SK-N-SH (cell line): ENCODE measurements at regions of chr12 and their contacts with region 1.

Region 1: DNA sequence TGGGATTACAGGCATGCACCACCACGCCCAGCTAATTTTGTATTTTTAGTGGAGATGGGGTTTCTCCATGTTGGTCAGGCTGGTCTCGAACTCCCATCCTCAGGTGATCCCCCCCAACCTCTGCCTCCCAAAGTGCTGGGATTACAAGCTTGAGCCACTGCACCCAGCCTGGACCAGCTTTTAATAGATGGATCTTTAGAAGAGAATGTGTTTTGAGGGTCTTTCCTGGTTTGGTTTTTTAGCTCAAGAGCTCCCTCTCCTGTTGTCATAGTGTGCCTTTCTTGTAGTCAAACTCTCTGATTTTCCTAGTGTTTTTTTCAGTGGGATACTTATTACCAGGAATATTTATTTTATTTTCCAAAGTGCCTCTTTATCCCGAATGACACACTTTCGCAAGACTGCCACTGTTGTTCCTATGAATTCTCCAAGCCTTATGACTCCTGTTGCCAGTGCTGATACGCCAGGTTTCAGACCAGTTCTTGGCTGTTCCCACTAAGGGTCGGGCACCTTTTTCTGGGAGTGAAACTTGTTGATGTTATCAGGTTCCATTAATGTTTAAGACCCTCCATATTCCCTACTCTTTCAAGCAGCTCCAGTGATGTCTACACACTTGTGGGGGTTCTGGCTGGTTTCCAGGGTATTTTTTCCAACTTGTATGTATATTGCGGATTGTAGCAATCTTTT is 31.5 kb upstream of the LIMA1 start:
- DNase-seq: peak; percentile 73
- H3K4me3 ChIP-seq: no peak overlapping the region; a peak in 1 of 4 replicates
- H3K27ac ChIP-seq: no peak overlapping the region
- H3K4me1 ChIP-seq: no peaks in the 10 kb centered on the region
- H3K27me3 ChIP-seq: no peaks in the 10 kb centered on the region
- CTCF ChIP-seq: peak; percentile 87
- EP300 ChIP-seq: no peak
- RAD21 ChIP-seq: peak; percentile 93

Region 2: DNA sequence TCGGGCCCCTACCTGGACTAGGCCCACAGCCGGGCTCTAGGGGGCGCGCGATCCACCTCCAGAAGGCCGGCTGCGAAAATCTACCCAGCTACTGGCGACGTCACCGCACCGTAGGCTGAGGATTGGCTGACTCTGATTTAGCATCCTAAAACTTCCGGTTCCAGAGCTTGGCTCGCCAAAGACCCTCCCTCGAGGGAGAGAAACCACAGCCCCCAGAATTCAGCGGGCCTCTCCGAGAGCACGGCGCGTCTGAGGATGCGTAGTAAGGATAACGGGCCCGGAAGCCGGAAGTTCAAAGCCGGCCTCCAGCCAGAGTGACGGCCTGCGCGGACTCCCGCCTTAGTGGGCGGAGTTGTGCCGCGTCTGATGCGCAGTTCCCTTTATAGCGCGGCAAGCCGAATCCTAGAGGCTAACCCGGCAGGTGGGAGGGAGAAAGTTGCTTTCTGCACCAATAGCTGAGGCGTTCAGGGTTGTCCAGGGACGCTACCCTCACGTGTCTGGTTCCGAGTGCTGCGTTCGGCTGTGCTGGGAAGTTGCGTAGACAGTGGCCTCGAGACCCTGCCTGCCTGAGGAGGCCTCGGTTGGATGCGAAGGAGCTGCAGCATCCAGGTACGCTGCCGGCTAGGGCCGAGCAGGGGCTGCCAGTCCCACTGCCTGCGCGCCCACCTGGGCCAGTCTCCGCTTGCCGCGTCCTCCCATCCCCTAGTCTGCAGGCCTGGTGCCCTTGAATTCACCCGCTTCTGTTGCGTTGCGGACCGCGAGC is 202.9 kb before region 1 on chr12 and contains the start of gene COX14:
- CTCF ChIA-PET with region 1: interaction called, 24 read pairs
- POLR2A ChIA-PET with region 1: no interaction called
- DNase-seq: peak; percentile 96
- H3K4me3 ChIP-seq: peak within 1 kb of the TSS; percentile 67 to 99
- H3K27ac ChIP-seq: peak within 1 kb of the TSS; percentile 69 to 95
- H3K4me1 ChIP-seq: peaks cover 12 to 18% of the 10 kb centered on the region in 2 experiments; a peak in 2 of 4 replicates
- H3K27me3 ChIP-seq: no peaks in the 10 kb centered on the region
- CTCF ChIP-seq: peak; percentile 98
- EP300 ChIP-seq: no peak
- RAD21 ChIP-seq: peak; percentile 49
- polyA plus RNA-seq, gene COX14: 204 and 218 TPM in 2 replicates

Region 3: GRCh38 chr12:50142993-50143392 is 171.8 kb before region 1 on chr12:
- CTCF ChIA-PET with region 1: interaction called, 10 read pairs
- POLR2A ChIA-PET with region 1: no interaction called
- DNase-seq: no peak
- H3K4me3 ChIP-seq: no peak overlapping the region
- H3K27ac ChIP-seq: no peak overlapping the region
- H3K4me1 ChIP-seq: no peaks in the 10 kb centered on the region
- H3K27me3 ChIP-seq: no peaks in the 10 kb centered on the region
- CTCF ChIP-seq: no peak
- EP300 ChIP-seq: no peak
- RAD21 ChIP-seq: no peak

Region 4: GRCh38 chr12:50187084-50187900 is 127.5 kb before region 1 on chr12:
- CTCF ChIA-PET with region 1: interaction called, 40 read pairs
- POLR2A ChIA-PET with region 1: no interaction called
- DNase-seq: no peak
- H3K4me3 ChIP-seq: no peak overlapping the region
- H3K27ac ChIP-seq: peak overlapping the region; percentile 72 to 93; a peak in 3 of 4 replicates
- H3K4me1 ChIP-seq: peaks cover 8 to 51% of the 10 kb centered on the region in 2 experiments
- H3K27me3 ChIP-seq: no peaks in the 10 kb centered on the region
- CTCF ChIP-seq: no peak
- EP300 ChIP-seq: peak in 1 of 2 experiments; percentile 85; a peak in 2 of 4 replicates
- RAD21 ChIP-seq: no peak

Region 5: DNA sequence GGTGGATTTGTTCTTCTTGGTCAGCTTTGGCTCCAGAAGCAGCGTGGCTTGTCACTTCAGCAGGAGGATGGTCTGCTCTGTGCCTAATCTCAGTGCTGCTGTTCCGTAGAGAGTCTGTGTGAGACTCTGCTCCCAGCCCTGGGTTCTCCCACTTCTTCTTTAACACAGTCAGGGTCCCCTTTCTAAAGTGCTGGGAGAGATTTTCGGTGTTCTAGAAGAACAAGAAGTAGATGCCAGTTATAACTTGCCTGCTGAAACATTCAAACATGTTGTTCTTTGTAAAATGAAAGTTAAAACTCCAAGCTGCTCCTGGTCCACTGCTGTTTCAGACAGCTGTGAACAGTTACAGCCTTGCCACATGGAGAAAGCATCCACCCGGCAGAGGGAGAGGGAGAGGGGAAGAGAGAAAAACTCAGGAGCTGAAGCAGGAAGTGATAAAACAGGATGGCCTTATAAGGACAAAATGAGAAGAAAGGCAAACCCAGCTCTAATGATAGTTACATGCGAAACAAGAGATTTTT is 92.4 kb before region 1 on chr12:
- CTCF ChIA-PET with region 1: interaction called, 20 read pairs
- POLR2A ChIA-PET with region 1: no interaction called
- DNase-seq: peak; percentile 73
- H3K4me3 ChIP-seq: peak overlapping the region; percentile 65 to 71
- H3K27ac ChIP-seq: peak overlapping the region; percentile 83 to 97
- H3K4me1 ChIP-seq: peaks cover 6 to 20% of the 10 kb centered on the region in 2 experiments; a peak in 3 of 4 replicates
- H3K27me3 ChIP-seq: no peaks in the 10 kb centered on the region
- CTCF ChIP-seq: peak; percentile 42
- EP300 ChIP-seq: no peak
- RAD21 ChIP-seq: peak; percentile 12; the same call in 1 of the 2 replicates